K562 (cell line): ENCODE measurements at regions of chr20 and their contacts with region 1.

Region 1: DNA sequence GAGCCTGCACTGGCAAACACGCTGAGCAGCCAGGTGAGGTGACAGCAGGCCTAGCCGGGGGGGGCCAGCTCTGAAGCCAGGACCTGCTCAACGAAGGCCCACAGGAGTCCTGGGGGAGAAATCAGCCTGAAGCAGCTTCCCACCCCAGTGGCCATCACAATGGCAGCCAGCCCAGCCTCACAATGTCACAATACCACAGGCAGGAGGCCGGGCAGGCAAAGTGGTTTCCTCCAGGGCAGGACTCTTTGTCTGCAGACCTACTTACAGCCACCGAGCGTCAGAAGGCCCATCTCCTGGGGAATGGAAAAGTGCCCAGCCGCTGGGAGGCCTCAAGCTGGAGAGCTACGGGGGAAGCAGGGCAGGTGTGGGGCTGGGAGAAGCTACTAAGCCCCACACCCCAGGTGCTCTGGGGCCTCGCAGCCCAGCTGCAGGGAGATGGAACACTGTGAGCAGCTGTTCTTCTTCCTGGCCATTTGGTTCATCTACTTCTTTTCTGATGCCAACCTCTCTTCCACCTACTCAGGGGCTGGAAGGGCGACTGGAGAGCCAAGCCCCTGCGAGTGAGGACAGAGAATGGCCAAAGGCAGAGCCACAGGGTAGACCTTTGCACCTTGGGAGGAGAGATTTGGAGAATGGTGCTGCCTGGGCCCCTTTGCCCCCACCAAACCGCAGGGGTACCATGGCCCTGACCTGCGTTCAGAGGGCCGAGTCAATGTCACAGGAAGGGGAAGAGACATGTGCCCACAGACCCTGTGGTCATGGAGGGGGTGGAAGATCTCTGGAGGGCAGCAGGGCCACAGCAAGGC is 22.3 kb upstream of the AVP start:
- DNase-seq: no peak
- ATAC-seq: no peak
- H3K4me3 ChIP-seq: no peak overlapping the region
- H3K27ac ChIP-seq: no peak overlapping the region
- H3K4me1 ChIP-seq: peaks cover 0 to 11% of the 10 kb centered on the region in 2 experiments; a peak in 4 of 5 replicates
- H3K27me3 ChIP-seq: no peaks in the 10 kb centered on the region
- CTCF ChIP-seq: no peak
- EP300 ChIP-seq: no peak
- POLR2A ChIP-seq: no peak
- RAD21 ChIP-seq: no peak

Region 2: DNA sequence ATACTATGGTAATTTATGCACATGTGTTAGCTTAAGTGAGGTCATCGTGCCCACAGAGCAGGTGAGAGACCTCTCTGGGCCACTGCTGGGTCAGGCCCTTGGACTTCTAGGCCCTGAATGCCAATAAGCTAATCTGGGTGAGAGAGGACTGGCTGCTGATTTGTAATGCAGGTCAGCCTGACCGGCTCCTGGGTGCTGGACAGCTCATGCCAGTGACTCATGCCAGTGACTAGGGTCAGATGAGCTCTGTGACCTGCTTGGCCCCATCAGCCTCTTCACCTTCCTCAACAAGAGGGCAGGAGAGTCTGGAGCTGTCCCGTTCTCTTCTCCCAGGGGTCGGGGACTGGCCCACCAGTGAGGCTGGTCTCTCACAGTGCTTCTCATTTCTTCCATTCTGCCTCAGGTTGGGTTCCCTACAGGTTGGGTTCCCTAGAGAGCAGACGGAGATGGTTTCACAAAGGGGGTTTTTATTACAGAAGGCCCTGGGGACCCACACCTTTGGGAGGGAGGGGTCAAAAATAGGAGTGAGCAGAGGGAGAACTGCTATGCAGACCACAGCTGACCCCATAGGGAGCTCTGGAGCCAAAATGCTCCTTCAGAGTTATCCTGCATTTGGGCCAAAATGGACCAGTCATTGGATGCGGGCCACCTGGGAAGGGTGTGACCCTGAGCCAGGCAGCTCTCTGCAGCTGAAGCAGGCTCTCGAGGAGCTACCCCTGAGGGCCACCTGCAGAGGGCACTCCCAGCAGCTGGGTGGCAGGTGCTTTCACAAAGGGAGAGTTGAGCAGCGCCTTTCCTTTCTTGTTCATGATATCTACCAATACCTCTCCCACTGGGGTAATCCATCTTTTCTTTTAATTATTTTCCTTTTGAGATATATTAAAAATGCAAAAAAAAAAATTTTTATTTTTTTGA is 37.6 kb before region 1 on chr20:
- CTCF ChIA-PET with region 1: no interaction called
- POLR2A ChIA-PET with region 1: no interaction called
- in situ Hi-C with region 1: no loop called
- intact Hi-C with region 1: loop called (anchors 5 kb)
- DNase-seq: peak in 2 of 4 experiments; percentile 11 to 31
- ATAC-seq: peak; percentile 77
- H3K4me3 ChIP-seq: no peak overlapping the region
- H3K27ac ChIP-seq: no peak overlapping the region
- H3K4me1 ChIP-seq: peaks cover 0 to 18% of the 10 kb centered on the region in 2 experiments; a peak in 2 of 5 replicates
- H3K27me3 ChIP-seq: no peaks in the 10 kb centered on the region
- CTCF ChIP-seq: peak; percentile 43 to 54 (median 52)
- EP300 ChIP-seq: no peak
- POLR2A ChIP-seq: no peak
- RAD21 ChIP-seq: peak in 1 of 2 experiments; percentile 40; a peak in 2 of 4 replicates